ENCODE measurements at regions of chr3 and their contacts with region 1.

Region 1: DNA sequence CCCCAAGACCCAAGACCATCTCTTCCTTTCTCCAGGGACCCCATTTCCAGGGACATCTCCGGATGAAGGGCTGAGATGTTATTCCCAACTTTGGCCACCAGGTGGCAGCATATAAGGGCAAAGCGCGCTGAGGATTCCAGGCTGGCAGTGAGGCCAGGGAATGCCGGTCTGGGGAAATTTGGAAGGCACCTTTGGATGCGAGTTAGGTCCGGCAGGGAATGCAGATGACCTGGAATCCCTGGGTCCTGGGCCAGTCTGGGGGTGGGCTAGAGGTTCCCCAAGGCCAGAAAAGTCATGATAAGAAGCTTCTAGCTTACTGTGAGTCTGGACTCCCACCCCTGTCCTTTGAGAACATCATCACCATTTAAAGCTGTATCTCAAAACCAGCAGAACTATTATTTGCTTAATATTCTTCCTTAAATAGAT is 1.6 kb upstream of the CHST13 start:
- DNase-seq: peak; percentile 78
- H3K4me3 ChIP-seq: no peak overlapping the region
- H3K27ac ChIP-seq: no peak overlapping the region
- H3K4me1 ChIP-seq: peaks cover 3 to 53% (median 31%) of the 10 kb centered on the region in 6 donors
- H3K27me3 ChIP-seq: peaks cover 0 to 60% (median 16%) of the 10 kb centered on the region in 7 donors
- CTCF ChIP-seq: peak; percentile 76 to 94 (median 91)
- POLR2A ChIP-seq: no peak

Region 2: DNA sequence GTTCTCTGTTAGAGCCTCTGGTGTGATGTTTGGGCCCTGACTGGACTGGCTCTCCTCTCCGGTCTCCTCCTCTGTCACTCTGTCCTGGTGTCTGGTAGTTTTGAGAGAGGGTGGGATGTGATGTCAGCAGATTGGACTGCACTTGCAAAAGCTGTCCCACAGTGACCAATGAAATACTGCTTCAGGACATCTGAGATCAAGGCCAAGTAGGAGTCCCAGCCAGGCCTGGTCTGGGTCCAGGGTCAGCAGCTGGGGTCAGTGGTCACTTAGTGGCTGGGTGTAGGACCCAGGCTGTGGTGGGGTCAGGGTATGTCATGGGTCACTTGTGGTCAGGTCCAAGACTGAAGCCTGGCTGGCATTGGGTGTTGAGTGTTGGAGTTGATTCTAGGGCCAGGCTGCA is 362.9 kb before region 1 on chr3:
- intact Hi-C with region 1: no loop called
- DNase-seq: no peak
- H3K4me3 ChIP-seq: no peak overlapping the region
- H3K27ac ChIP-seq: no peak overlapping the region
- H3K4me1 ChIP-seq: no peaks in the 10 kb centered on the region
- H3K27me3 ChIP-seq: peaks cover 0 to 3% (median 0%) of the 10 kb centered on the region in 7 donors
- CTCF ChIP-seq: no peak
- POLR2A ChIP-seq: no peak

Region 3: DNA sequence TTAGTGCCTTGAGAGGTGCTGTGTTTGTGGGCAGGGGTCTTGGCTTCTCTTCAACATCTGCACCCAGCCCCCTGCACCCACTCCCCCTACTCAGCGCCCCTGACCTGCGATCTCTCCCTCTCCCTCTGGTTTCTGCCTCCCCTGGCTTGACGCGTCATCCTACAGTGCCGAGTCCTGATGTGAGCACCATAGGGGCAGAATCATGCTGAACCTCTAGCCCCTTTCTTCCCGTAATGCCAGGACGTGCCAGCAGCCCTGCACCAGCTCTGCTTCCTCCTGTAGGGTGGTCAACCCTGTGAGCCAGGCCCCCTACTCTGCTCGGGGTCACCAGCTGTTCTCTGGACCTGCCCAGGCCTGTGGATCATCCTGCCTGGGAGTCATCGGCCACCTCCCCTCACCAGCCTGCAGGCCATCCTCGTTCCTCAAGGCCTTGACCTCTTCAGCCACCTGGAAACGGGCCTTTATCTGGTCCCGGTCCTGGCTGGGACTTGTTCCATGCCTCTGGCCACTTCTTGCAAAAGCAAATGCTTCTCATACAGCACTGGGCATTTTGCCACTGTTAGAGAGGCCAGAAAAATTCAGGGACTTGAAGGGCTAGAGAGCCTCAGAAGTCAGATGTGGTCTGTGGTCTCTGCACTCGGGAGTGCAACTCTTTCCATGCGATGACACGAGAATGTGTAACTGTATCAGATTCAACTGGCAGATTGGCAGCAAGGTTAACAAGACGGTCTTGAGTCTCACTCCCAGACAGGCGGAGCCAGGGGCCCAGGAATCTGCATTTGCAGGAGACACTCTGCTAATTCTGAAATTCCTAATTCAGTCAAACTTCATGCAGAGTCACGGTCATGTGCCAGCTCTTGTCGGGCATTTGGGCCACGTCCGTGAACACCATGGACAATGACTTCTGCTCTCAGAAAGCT is 148.4 kb before region 1 on chr3:
- intact Hi-C with region 1: no loop called
- DNase-seq: peak; percentile 58
- H3K4me3 ChIP-seq: no peak overlapping the region
- H3K27ac ChIP-seq: no peak overlapping the region
- H3K4me1 ChIP-seq: no peaks in the 10 kb centered on the region
- H3K27me3 ChIP-seq: no peaks in the 10 kb centered on the region
- CTCF ChIP-seq: no peak
- POLR2A ChIP-seq: no peak

Region 4: GRCh38 chr3:126654571-126655383 is 132.4 kb after region 1 on chr3 and contains the start of gene TXNRD3:
- intact Hi-C with region 1: loop called (anchors 10 kb)
- DNase-seq: peak; percentile 91
- H3K4me3 ChIP-seq: peak within 1 kb of the TSS; percentile 51 to 86 (median 72)
- H3K27ac ChIP-seq: peak within 1 kb of the TSS; percentile 58 to 87 (median 81)
- H3K4me1 ChIP-seq: peaks cover 0 to 21% (median 11%) of the 10 kb centered on the region in 6 donors
- H3K27me3 ChIP-seq: peaks cover 0 to 49% (median 4%) of the 10 kb centered on the region in 7 donors
- CTCF ChIP-seq: peak in 3 of 11 experiments; percentile 9 to 26 (median 10)
- POLR2A ChIP-seq: peak in 1 of 3 donors; percentile 30
- total RNA-seq, gene TXNRD3: 3.7 to 12.9 (median 7.6) TPM

Region 5: DNA sequence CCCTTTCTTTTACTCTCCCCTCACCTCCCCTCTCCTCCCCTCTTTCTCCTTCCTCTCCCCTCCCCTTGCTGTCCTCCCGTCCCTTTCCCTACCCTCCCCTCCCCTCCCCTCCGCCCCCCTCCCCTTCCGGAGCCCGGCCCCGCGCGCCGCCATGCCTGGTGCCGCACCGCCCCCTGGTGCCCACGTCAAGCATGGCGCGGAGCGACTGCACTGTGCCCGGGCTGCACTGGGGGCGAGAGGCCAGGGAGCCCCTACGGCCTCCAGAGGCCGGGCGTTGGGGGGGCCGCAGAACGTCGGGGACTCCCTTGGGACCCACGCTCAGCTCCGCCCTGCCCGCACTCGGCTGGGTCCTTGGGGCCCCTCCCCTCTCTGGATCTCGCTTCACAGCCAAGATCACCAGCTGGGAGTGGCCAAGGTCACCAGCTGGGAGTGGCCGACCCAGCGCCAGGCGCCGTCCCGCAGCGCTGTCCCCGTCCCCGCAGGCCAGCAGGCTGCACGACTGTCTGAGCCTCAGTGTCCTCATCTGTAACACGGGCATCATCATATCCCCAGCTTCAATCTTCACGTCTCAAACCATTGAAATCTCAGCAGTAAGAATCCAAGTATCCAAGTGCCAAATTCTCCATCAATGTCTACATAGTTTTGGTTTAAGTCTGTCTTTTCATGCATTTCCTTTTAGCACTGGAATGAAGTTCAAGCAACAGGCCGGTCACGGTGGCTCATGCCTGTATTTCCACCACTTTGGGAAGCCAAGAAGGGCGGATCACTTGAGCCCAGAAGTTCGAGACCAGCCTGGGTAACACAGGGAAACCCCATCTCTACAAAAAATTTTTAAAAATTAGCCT is 1025.6 kb after region 1 on chr3:
- intact Hi-C with region 1: loop called (anchors 5 kb)
- DNase-seq: peak; percentile 93
- H3K4me3 ChIP-seq: peak overlapping the region; percentile 41 to 81 (median 55)
- H3K27ac ChIP-seq: peak overlapping the region in 6 of 8 donors; percentile 19 to 80 (median 63)
- H3K4me1 ChIP-seq: peaks cover 0 to 29% (median 16%) of the 10 kb centered on the region in 6 donors
- H3K27me3 ChIP-seq: no peaks in the 10 kb centered on the region
- CTCF ChIP-seq: peak; percentile 32 to 90 (median 75)
- POLR2A ChIP-seq: no peak

Measured in spleen (tissue), 13 donors.